ENCODE measurements at regions of chr1 and their contacts with region 1.

Region 1: DNA sequence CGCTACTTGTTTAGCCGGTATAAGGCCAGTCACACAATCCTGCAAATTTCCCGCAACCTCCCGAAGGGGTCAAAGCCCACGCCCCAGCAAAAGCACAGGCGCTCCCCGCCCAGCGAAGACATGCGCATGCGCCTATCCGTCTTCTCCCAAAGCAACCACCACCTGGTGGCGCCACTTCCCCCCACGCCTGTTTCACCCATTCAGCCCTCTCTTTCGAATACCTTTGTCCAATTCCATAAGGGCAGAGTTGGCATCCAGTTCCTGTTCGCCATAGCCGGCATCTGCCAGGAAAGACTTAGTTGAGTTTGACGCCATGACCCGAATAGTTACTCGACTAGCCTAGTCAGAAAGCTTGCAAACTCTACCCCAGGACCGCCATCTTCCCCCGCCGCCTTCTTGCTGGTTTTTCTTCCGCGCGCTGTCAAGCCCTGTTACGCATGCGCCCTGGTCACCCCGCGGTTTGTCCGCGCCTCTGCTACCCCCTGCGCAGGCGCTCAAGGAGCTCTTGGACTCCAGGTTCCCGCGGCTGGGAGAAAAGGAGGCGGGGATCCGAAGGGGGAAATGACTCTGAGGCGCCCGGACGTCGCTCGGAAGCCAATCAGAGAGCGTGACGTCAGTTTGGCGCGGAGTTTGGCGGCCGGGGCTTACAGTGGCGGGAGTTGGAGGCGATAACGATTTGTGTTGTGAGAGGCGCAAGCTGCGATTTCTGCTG is at the starts of genes DTL and INTS7:
- DNase-seq: peak; percentile 99
- ATAC-seq: peak; percentile 98
- total RNA-seq, gene DTL: 1.3 TPM
- total RNA-seq, gene INTS7: 9.6 TPM

Region 2: DNA sequence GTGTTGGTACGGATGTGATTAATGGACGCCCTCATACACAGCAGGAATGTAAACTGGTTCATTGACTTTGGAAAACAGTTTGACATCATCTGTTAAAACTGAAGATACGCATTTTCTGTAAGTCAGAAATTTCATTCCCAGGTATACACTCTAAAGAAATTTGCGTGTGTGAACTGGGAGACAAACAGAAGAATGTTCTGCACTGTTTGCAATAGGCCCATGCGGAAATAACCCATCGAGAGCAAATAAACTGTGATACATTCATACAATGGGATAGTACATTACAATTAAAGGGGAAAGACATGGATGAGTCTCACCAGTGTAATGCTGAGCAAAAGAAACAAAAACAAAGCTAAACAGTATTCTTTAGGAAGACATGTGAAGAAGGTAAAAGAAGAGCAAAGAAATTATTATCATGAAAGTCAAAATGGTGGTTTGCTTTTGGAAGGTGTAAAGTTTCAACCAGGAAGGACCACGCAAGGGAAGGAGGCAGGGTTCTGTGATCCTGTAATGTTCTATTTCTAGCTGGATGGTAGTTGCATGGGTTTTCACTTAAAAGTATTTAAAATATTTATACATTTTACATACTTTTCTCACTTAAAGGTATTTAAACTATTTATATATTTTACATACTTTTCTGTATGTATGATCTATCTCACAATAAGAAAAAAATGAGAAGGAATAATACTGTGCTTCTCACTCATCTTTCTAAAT is 30.2 kb before region 1 on chr1:
- intact Hi-C with region 1: loop called (anchors 2 kb)
- DNase-seq: no peak
- ATAC-seq: no peak

Measured in Right ventricle myocardium inferior (tissue), 1 donor.